CD4-positive, alpha-beta T cell (primary cell): ENCODE measurements at regions of chr1 and their contacts with region 1.

Region 1: DNA sequence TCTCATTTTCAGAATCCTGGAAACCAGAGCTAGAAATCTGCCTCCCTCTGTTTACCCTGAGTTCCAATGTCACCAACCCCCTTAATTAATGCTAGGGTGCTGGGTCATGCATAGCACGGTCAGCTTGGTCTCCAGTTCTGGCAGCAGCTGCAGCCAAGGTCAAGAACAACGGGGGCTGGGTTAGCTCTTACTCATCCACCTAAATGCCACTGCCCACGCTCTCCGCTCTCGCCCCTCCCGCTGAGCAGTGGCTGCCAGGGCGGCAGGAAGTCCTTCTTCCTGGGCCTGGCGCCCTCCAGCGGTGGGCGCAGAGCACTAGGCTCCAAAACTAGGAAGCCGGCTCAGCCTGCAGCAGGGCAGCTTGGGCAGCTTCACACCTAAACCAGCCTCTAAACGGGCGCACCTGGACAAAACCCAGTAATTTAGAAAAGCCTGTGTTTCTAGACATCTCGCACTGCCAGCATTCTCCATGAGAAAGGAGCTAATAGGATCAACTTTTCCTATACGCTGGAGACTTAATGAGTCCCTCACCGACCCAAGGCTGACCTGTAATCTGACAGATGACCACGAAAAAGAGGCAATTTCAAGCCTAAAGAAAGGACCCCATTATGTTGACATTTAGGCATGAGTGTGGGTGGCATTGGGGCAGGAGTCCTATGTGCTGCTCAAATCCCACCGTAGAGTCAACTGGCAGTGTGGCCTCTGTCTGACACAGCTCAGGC is 78.3 kb upstream of the LRRN2 start:
- DNase-seq: peak; percentile 37 to 80 (median 56)
- ATAC-seq: peak; percentile 98
- H3K4me3 ChIP-seq: no peak overlapping the region
- H3K4me3 Mint-ChIP-seq: peak overlapping the region; percentile 30
- H3K27ac ChIP-seq: no peak overlapping the region
- H3K27ac Mint-ChIP-seq: no peak overlapping the region
- H3K4me1 ChIP-seq: peaks cover 8% of the 10 kb centered on the region
- H3K4me1 Mint-ChIP-seq: peaks cover 7% of the 10 kb centered on the region
- H3K27me3 ChIP-seq: peaks cover 0 to 3% of the 10 kb centered on the region in 2 experiments
- H3K27me3 Mint-ChIP-seq: peaks cover 24% of the 10 kb centered on the region
- CTCF ChIP-seq: peak; percentile 78

Region 2: GRCh38 chr1:204565617-204566582 is 198.0 kb before region 1 on chr1:
- CTCF ChIA-PET with region 1: interaction called, 8 read pairs
- POLR2A ChIA-PET with region 1: no interaction called
- intact Hi-C with region 1: loop called (anchors 1 kb)
- DNase-seq: peak; percentile 24 to 85 (median 43)
- ATAC-seq: peak; percentile 87
- H3K4me3 ChIP-seq: no peak overlapping the region
- H3K4me3 Mint-ChIP-seq: no peak overlapping the region
- H3K27ac ChIP-seq: no peak overlapping the region
- H3K27ac Mint-ChIP-seq: peak overlapping the region; percentile 80
- H3K4me1 ChIP-seq: peaks cover 37% of the 10 kb centered on the region
- H3K4me1 Mint-ChIP-seq: peaks cover 54% of the 10 kb centered on the region
- H3K27me3 ChIP-seq: no peaks in the 10 kb centered on the region
- H3K27me3 Mint-ChIP-seq: no peaks in the 10 kb centered on the region
- CTCF ChIP-seq: peak; percentile 66